Transverse colon (tissue), 4 donors: ENCODE measurements at regions of chrX and their contacts with region 1.

Region 1: DNA sequence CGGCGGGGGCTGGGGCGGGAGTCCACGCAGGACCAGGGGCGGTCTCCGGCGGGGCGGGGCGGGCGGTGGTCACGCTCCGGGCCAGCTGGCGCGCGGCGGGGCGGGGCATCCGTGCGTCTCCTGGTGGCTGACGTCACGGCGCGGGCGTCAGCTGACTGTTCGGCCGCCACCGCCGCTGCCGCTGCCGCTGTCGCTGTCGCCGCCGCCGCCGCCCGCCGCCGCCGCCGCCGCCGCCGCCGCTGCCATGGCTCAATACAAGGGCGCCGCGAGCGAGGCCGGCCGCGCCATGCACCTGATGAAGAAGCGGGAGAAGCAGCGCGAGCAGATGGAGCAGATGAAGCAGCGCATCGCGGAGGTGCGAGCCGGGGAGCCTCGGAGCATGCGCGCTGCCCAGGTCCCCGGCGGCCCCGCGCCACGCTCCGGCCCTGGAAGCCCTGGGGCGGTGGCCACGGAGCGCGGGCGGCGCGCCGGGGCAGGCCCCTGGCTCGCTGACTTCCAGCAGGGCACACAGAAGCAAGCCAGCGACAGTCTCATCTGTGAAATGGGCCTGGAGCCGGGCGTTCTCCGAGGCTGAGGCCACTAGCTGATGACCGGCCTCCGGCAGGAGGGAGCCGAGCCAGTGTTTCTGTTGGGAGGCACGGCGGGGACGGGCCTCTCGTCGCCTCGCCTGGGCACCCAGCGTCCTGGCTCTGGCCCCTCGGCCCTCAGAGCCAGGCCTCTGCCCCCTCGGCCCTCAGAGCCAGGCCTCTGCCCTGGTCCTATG is at the start of gene FAM50A:
- DNase-seq: peak; percentile 86
- H3K4me3 ChIP-seq: peak within 1 kb of the TSS; percentile 53 to 68 (median 60)
- H3K27ac ChIP-seq: peak within 1 kb of the TSS; percentile 84 to 89 (median 87)
- H3K4me1 ChIP-seq: peaks cover 0 to 17% (median 8%) of the 10 kb centered on the region in 4 donors
- H3K27me3 ChIP-seq: no peaks in the 10 kb centered on the region
- CTCF ChIP-seq: peak in 1 of 5 experiments; percentile 18
- EP300 ChIP-seq: no peak
- POLR2A ChIP-seq: no peak
- total RNA-seq, gene FAM50A: 39.9 to 130 (median 52.0) TPM

Region 2: GRCh38 chrX:155745792-155746191 is 1301.6 kb after region 1 on chrX:
- in situ Hi-C with region 1: no loop called
- intact Hi-C with region 1: loop called (anchors 5 kb)
- DNase-seq: peak; percentile 66
- H3K4me3 ChIP-seq: no peak overlapping the region
- H3K27ac ChIP-seq: peak overlapping the region in 2 of 4 donors; percentile 51 to 54
- H3K4me1 ChIP-seq: peaks cover 0 to 17% (median 2%) of the 10 kb centered on the region in 4 donors
- H3K27me3 ChIP-seq: no peaks in the 10 kb centered on the region
- CTCF ChIP-seq: no peak
- EP300 ChIP-seq: no peak
- POLR2A ChIP-seq: no peak